Endothelial cell of umbilical vein (primary cell): ENCODE measurements at regions of chr3 and their contacts with region 1.

Region 1: DNA sequence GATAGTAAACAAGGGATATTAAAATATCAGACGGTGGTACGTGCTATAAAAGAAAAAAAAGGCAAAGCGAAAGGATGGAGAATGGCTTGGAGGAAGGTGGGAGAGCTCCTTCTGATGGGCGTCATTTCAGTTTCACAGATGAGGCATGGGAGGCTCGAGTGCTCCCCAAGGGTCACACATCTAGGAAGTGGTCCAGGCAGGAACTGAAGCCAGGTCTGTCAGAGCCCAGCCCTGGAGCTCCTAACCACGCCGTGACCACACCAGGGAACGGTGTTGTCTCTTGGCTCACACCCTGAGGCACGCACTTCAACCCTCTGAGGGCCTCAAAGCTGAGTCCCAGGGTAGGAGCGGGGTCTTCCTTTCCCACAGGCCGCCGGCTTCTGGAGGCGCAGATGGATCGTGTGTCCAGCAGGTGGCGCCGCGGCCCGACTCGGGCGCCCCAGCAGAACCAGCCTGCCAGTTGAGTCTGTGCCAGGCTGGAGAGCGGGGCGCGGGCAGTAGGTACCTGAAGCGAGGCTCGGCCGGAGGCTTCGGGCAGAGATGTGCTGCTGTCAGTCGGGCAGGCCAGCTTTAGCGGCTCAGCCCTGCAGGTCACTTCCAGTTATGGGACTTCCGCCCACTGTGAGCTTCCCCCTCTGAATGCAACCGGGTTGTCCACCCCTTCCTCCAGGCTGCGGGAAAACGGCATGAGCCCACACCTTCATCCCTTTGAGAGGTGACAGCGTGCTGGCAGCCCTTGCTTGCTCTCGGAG is 68.1 kb downstream of the SLC6A1 start:
- DNase-seq: peak; percentile 54
- H3K4me3 ChIP-seq: no peak overlapping the region
- H3K27ac ChIP-seq: no peak overlapping the region
- H3K4me1 ChIP-seq: no peaks in the 10 kb centered on the region
- H3K27me3 ChIP-seq: peaks cover 2 to 4% of the 10 kb centered on the region in 2 experiments
- CTCF ChIP-seq: peak; percentile 83 to 95
- POLR2A ChIP-seq: no peak

Region 2: GRCh38 chr3:10945683-10946287 is 114.9 kb before region 1 on chr3:
- CTCF ChIA-PET with region 1: interaction called, 125 read pairs
- POLR2A ChIA-PET with region 1: no interaction called
- dilution Hi-C with region 1: no loop called
- intact Hi-C with region 1: loop called (anchors 1 kb)
- DNase-seq: peak; percentile 43
- H3K4me3 ChIP-seq: no peak overlapping the region
- H3K27ac ChIP-seq: no peak overlapping the region
- H3K4me1 ChIP-seq: no peaks in the 10 kb centered on the region
- H3K27me3 ChIP-seq: no peaks in the 10 kb centered on the region
- CTCF ChIP-seq: peak; percentile 71 to 91
- POLR2A ChIP-seq: no peak

Region 3: DNA sequence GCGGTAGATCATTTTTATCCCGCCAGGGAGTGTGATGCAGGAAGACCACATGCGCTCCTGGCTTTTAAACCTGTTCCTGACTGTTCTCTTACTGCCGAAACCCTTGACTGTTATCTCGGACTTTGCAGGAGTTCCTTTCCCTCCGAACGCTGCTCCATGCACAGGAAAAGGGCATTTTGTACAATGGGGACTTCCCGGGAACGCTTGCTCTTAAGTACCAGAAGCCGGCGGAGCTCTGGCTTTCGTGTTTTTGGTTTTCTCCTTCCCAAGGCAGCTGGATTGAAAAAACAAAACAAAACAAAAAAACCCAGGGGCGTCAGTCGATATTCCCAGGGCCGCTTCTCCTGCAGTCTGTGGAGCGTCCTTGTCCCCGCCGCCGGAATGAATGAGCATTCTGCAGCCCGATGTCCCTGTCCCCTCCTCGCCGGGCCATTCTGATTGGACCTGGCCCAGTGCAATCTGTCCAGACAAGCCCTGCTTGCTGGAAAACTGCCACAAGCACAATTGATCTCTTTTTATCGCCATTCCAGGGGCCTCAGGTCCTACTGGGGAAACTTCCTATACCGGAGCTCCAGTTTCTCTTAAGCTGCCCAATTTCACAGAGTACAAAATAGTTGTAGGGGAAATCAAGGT is 23.3 kb before region 1 on chr3:
- CTCF ChIA-PET with region 1: interaction called, 11 read pairs
- POLR2A ChIA-PET with region 1: no interaction called
- dilution Hi-C with region 1: no loop called
- intact Hi-C with region 1: no loop called
- DNase-seq: peak; percentile 48
- H3K4me3 ChIP-seq: no peak overlapping the region
- H3K27ac ChIP-seq: no peak overlapping the region
- H3K4me1 ChIP-seq: no peaks in the 10 kb centered on the region
- H3K27me3 ChIP-seq: peaks cover 27 to 28% of the 10 kb centered on the region in 2 experiments
- CTCF ChIP-seq: no peak
- POLR2A ChIP-seq: no peak

Region 4: GRCh38 chr3:11195721-11196332 is 135.2 kb after region 1 on chr3:
- CTCF ChIA-PET with region 1: interaction called, 15 read pairs
- POLR2A ChIA-PET with region 1: no interaction called
- dilution Hi-C with region 1: no loop called
- intact Hi-C with region 1: loop called (anchors 1 kb)
- DNase-seq: peak; percentile 65
- H3K4me3 ChIP-seq: no peak overlapping the region
- H3K27ac ChIP-seq: peak overlapping the region; percentile 67
- H3K4me1 ChIP-seq: peaks cover 61% of the 10 kb centered on the region
- H3K27me3 ChIP-seq: no peaks in the 10 kb centered on the region
- CTCF ChIP-seq: no peak
- POLR2A ChIP-seq: peak; percentile 65

Region 5: DNA sequence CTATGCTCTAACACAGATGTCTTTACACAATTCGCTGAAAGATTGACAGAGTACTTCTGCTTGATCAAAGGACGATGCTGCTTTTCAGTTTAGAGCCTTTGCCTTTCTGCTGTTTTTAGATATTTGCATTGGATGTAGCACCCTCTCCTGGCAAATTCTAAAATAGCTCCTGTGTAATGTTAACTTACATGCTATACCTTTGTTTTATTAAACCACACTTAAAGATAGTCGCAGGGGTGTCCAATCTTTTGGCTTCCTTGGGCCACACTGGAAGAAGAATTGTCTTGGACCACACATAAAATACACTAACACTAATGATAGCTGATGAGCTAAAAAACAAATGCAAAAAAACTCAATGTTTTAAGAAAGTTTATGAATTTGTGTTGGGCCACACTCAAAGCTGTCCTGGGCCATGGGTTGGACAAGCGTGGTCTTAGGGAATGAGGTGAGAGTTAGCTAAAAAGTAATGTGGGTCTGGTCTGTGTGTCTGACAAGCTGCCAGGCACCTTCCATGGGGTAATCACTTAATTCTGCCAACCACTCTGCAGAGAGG is 274.5 kb after region 1 on chr3:
- CTCF ChIA-PET with region 1: interaction called, 109 read pairs
- POLR2A ChIA-PET with region 1: no interaction called
- dilution Hi-C with region 1: no loop called
- intact Hi-C with region 1: loop called (anchors 1 kb)
- DNase-seq: peak; percentile 81
- H3K4me3 ChIP-seq: no peak overlapping the region
- H3K27ac ChIP-seq: no peak overlapping the region
- H3K4me1 ChIP-seq: peaks cover 15% of the 10 kb centered on the region
- H3K27me3 ChIP-seq: no peaks in the 10 kb centered on the region
- CTCF ChIP-seq: peak; percentile 41 to 56
- POLR2A ChIP-seq: no peak